ENCODE measurements at regions of chr22 and their contacts with region 1.

Region 1: DNA sequence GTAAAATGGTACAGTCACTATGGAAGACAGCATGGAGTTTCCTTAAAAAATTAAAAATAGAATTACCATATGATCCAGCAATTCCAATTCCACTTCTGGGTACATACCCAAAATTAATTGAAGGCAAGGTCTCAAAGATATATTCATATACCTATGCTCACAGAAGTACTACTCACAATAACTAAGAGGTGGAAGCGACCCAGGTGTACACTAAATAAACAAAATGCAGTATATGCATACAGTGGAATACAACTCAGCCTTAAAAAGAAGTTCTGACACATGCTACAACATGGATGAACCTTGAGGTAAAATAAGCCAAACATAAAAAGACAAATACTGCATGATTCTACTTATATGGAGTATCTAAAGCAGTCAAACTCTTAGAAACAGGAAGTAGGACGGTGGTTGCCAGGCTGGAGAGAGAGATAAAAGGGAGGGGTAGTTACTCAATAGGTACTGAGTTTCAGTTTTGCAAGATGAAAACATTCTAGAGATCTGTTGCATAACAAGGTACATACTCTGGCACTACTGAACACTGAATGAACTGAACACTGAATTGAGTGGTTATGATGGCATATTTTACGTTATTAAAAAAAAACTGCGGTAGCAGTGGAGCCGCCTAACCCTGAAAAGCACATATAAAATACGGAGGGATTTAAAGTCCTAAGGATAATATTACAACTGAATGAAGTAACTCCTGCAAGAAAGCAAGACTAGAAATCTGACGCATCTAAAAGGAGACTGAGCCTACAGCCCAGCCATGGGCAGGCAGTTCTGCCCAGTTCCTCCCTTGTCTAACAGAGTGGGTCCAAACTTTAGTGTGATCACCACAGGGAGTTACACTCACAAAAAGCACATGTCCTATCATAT is 12.8 kb downstream of the DGCR2 start:
- DNase-seq: peak; percentile 89 to 95 (median 93)
- H3K4me3 ChIP-seq: peak overlapping the region in 2 of 3 experiments; percentile 30 to 69
- H3K4me3 Mint-ChIP-seq: peak overlapping the region; percentile 10 to 86
- H3K27ac ChIP-seq: peak overlapping the region; percentile 90 to 92
- H3K27ac Mint-ChIP-seq: peak overlapping the region; percentile 94 to 100 (median 98)
- H3K4me1 ChIP-seq: peaks cover 62 to 70% of the 10 kb centered on the region in 2 donors
- H3K4me1 Mint-ChIP-seq: peaks cover 83% of the 10 kb centered on the region
- H3K27me3 ChIP-seq: no peaks in the 10 kb centered on the region
- H3K27me3 Mint-ChIP-seq: peaks cover 0 to 2% (median 2%) of the 10 kb centered on the region in 3 donors
- CTCF ChIP-seq: no peak

Region 2: DNA sequence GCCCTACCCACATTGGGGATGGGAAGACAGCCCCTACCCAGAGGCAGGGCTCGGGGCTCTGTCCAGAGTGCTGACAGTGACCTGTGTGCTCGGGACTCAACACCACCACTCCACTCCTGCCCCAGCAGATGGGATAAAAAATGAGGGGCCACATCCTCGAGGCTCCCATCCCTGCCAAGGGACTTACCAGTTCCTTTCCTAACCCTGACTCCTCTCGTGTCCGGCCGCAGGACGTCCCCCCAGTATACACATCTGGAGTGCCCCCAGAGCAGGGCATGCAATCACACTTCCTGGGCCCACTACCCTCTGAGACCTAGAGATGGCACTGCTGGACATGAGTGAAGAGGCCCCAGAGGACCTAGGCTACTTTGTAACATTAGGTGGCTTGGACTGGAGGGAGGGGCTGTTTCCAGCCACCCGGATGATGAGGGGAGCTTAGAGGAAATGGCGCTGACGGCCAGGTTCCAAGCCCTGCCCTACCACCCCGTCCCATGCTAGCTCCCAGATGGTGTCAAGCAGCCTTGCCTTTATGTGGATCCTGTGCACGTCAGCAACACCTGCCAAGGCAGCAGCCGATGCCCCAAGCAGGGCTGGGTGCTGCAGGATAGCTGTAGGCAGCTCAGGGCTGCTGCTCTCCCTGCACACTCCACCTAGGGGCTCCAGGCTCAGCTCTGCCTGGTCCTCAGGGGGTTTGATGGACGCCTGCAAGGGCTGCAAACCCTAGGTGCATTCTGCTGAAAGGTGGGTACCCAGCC is 73.8 kb before region 1 on chr22:
- intact Hi-C with region 1: no loop called
- DNase-seq: peak in 1 of 3 donors; percentile 1
- H3K4me3 ChIP-seq: no peak overlapping the region
- H3K4me3 Mint-ChIP-seq: no peak overlapping the region
- H3K27ac ChIP-seq: no peak overlapping the region
- H3K27ac Mint-ChIP-seq: peak overlapping the region in 1 of 7 donors; percentile 18
- H3K4me1 ChIP-seq: no peaks in the 10 kb centered on the region
- H3K4me1 Mint-ChIP-seq: peaks cover 8% of the 10 kb centered on the region
- H3K27me3 ChIP-seq: no peaks in the 10 kb centered on the region
- H3K27me3 Mint-ChIP-seq: peaks cover 11 to 14% (median 14%) of the 10 kb centered on the region in 3 donors
- CTCF ChIP-seq: no peak

Region 3: GRCh38 chr22:19085233-19085718 is 24.2 kb before region 1 on chr22:
- intact Hi-C with region 1: loop called in 1 of 2 experiments (anchors 1 kb)
- DNase-seq: peak in 2 of 3 donors; percentile 37 to 55
- H3K4me3 ChIP-seq: peak overlapping the region in 2 of 3 experiments; percentile 12 to 70
- H3K4me3 Mint-ChIP-seq: peak overlapping the region; percentile 57 to 85
- H3K27ac ChIP-seq: peak overlapping the region; percentile 92 to 96
- H3K27ac Mint-ChIP-seq: peak overlapping the region; percentile 92 to 99 (median 96)
- H3K4me1 ChIP-seq: peaks cover 50 to 54% of the 10 kb centered on the region in 2 donors
- H3K4me1 Mint-ChIP-seq: peaks cover 60% of the 10 kb centered on the region
- H3K27me3 ChIP-seq: no peaks in the 10 kb centered on the region
- H3K27me3 Mint-ChIP-seq: no peaks in the 10 kb centered on the region
- CTCF ChIP-seq: peak; percentile 28

Region 4: DNA sequence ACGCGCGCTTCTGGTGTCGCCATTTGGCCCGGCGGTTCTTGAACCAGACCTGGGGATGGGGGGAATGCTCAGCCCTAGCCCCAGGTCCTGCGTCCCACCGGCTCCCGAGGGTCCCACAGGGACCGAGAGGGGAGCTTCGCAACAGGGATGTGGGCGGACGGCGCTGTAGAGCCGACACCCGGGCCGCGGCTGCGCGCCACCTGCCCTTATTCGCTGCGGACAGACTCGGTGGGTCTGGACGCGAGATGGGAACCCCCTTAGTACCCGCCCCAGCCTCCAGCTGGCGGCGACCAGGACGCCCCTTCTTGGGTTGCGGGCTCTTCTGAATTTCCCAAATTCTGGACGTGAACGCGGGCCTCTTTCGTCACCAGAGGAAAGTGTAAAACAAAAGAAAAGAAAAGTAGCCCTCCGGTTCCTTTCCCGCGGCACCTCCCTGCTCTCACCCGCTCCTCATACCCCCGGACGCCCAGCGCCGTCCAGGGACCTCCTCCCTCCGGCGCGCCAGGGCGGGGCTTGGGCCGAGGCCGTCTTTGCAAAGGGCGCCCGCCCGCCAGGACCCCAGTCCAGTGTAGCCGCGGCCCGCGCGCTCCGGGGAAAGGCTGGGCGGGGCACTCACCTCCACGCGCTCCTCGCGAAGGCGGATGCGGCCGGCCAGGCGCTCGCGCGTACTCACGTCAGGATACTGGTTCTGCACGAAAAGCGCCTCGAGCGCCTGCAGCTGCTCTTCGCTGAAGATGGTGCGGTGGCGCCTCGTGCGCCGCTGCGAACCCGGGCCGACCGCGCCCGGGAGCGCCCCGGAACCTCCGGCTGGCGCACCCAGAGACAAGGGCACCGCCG is 39.8 kb after region 1 on chr22:
- intact Hi-C with region 1: no loop called
- DNase-seq: no peak
- H3K4me3 ChIP-seq: peak overlapping the region in 1 of 3 experiments; percentile 47
- H3K4me3 Mint-ChIP-seq: peak overlapping the region; percentile 47 to 77
- H3K27ac ChIP-seq: no peak overlapping the region
- H3K27ac Mint-ChIP-seq: no peak overlapping the region
- H3K4me1 ChIP-seq: peaks cover 6 to 11% of the 10 kb centered on the region in 2 donors
- H3K4me1 Mint-ChIP-seq: peaks cover 8% of the 10 kb centered on the region
- H3K27me3 ChIP-seq: peaks cover 35 to 62% of the 10 kb centered on the region in 2 donors
- H3K27me3 Mint-ChIP-seq: peaks cover 67 to 74% (median 68%) of the 10 kb centered on the region in 3 donors
- CTCF ChIP-seq: no peak

Measured in CD14-positive monocyte (primary cell).